ENCODE measurements at regions of chr19 and their contacts with region 1.

Region 1: DNA sequence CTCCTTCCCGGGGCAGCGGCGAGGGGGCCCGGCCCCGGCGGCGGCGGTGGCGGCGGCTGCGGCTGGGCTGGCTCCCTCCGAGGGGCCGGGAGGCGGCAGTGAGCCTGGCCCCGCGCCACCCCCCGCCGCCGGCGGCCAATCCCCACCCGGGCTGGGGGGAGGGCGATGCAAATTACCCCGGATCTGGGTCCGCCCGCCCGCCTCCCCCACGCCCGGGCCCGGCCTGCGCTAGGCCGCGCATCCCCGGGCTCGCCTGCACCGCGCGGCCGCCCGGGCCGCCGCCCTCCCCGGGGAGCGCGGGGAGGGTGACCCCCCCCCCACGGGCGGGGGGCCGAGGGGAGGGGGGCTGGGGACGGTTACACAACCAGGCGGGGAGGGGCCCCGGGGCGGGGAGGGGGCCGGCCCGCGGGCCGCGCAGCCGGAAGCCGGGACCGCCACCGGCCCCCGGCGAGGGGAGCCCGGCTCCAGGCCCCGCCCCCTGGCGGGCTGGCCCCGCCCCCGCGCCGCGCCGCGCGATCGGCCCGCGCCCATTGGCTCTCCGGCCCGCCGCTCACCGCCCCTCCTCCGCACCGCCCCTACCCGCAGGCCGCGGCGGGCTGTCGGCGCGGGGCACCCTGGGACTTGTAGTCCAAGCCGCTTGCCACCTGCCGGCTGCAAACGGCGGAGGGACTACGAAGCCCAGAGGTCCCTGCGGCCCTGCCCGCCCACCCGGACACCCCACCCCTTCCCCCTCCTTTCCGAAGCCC is 1.1 kb downstream of the ZBTB7A start:
- DNase-seq: peak; percentile 97 to 99 (median 98)
- ATAC-seq: peak; percentile 89
- H3K4me3 ChIP-seq: no peak overlapping the region
- H3K4me3 Mint-ChIP-seq: peak overlapping the region; percentile 29 to 90 (median 67)
- H3K27ac ChIP-seq: peak overlapping the region; percentile 95
- H3K27ac Mint-ChIP-seq: peak overlapping the region in 6 of 9 donors; percentile 12 to 86 (median 66)
- H3K4me1 ChIP-seq: peaks cover 41 to 56% of the 10 kb centered on the region in 2 donors
- H3K4me1 Mint-ChIP-seq: peaks cover under 1 to 42% (median 26%) of the 10 kb centered on the region in 7 donors
- H3K27me3 ChIP-seq: no peaks in the 10 kb centered on the region
- H3K27me3 Mint-ChIP-seq: no peaks in the 10 kb centered on the region

Region 2: GRCh38 chr19:4007021-4007835 is 58.4 kb before region 1 on chr19 and contains the start of gene PIAS4:
- CTCF ChIA-PET with region 1: no interaction called
- POLR2A ChIA-PET with region 1: interaction called, 6 read pairs
- intact Hi-C with region 1: loop called (anchors 1 kb)
- DNase-seq: peak; percentile 93 to 97 (median 96)
- ATAC-seq: peak; percentile 95
- H3K4me3 ChIP-seq: peak within 1 kb of the TSS; percentile 76
- H3K4me3 Mint-ChIP-seq: peak within 1 kb of the TSS; percentile 82 to 93 (median 88)
- H3K27ac ChIP-seq: peak within 1 kb of the TSS; percentile 75
- H3K27ac Mint-ChIP-seq: peak within 1 kb of the TSS; percentile 31 to 93 (median 85)
- H3K4me1 ChIP-seq: peaks cover 26 to 27% of the 10 kb centered on the region in 2 donors
- H3K4me1 Mint-ChIP-seq: peaks cover 13 to 33% (median 23%) of the 10 kb centered on the region in 7 donors
- H3K27me3 ChIP-seq: no peaks in the 10 kb centered on the region
- H3K27me3 Mint-ChIP-seq: no peaks in the 10 kb centered on the region
- total RNA-seq, gene PIAS4: 23.9 to 40.6 (median 28.8) TPM

Region 3: DNA sequence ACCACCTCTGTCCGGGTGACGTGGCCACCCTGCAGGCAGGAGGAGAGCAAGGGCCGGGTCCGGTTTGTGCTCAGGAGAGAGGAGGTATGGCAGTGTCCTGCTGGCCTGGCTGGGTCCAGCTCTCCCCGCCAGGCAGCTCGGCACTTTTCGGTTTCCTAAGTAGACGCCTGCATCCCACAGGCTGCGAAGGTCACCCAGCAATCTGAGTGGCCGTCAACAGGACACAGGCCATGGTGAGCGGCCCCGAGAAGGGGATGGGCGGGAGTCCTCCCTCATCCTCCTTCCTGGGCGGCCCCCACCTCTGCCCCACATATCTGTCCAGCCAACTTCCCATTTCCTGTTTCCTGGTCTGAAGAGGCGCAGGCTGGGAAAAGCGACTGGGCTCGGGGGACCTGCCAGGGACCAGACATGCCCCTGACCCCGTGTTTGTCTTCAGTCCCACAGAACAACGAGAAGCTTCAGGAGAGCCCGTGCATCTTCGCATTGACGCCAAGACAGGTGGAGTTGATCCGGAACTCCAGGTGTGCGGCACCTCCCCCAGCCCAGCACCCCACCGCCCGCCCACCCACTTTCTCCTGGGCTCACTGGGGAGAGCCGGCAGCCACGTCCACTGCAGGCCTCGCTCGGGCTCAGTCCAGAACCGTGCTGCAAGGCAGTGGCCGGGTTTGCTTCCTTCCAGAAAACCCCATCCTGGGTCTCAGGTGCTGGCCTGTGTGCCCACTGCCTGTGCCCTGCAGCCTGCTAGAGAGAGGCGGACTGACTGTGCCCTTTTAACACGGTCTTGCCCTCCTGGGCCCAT is 41.8 kb before region 1 on chr19:
- CTCF ChIA-PET with region 1: no interaction called
- POLR2A ChIA-PET with region 1: no interaction called
- intact Hi-C with region 1: no loop called
- DNase-seq: no peak
- ATAC-seq: no peak
- H3K4me3 ChIP-seq: no peak overlapping the region
- H3K4me3 Mint-ChIP-seq: no peak overlapping the region
- H3K27ac ChIP-seq: no peak overlapping the region
- H3K27ac Mint-ChIP-seq: no peak overlapping the region
- H3K4me1 ChIP-seq: no peaks in the 10 kb centered on the region
- H3K4me1 Mint-ChIP-seq: peaks cover 0 to 8% (median 7%) of the 10 kb centered on the region in 7 donors
- H3K27me3 ChIP-seq: no peaks in the 10 kb centered on the region
- H3K27me3 Mint-ChIP-seq: no peaks in the 10 kb centered on the region

Region 4: DNA sequence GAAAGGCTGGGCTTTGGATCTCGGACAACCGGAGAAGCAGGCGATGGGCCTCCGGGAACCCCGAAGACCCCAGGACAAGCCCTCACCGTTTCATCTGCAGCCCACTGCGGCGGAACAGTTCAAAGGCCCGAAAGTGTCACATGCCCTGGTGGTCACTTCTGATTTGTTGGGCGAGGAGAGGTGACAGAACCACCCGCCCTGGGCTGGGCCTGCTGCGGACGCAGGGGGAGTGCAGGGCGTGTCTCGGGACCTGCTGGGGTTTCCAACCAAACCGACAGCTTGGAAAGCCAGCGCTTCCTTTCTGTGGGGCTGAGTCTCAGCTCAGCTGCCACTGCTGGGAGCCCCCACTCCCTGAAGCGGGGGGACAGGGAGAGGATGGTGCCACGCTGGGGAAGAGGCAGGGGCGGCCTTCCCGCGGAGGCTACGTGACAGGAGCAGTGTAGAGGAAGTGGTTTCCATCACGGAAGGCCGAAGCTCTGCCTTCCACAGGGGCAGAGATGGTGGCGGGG is 23.9 kb after region 1 on chr19:
- CTCF ChIA-PET with region 1: no interaction called
- POLR2A ChIA-PET with region 1: interaction called, 11 read pairs
- intact Hi-C with region 1: loop called (anchors 1 to 2 kb)
- DNase-seq: peak in 7 of 9 donors; percentile 16 to 69 (median 26)
- ATAC-seq: peak; percentile 79
- H3K4me3 ChIP-seq: peak overlapping the region; percentile 27
- H3K4me3 Mint-ChIP-seq: peak overlapping the region; percentile 76 to 83 (median 79)
- H3K27ac ChIP-seq: peak overlapping the region; percentile 67
- H3K27ac Mint-ChIP-seq: peak overlapping the region; percentile 82 to 97 (median 94)
- H3K4me1 ChIP-seq: peaks cover 46% of the 10 kb centered on the region in 2 donors
- H3K4me1 Mint-ChIP-seq: peaks cover 23 to 53% (median 47%) of the 10 kb centered on the region in 7 donors
- H3K27me3 ChIP-seq: no peaks in the 10 kb centered on the region
- H3K27me3 Mint-ChIP-seq: no peaks in the 10 kb centered on the region

Region 5: DNA sequence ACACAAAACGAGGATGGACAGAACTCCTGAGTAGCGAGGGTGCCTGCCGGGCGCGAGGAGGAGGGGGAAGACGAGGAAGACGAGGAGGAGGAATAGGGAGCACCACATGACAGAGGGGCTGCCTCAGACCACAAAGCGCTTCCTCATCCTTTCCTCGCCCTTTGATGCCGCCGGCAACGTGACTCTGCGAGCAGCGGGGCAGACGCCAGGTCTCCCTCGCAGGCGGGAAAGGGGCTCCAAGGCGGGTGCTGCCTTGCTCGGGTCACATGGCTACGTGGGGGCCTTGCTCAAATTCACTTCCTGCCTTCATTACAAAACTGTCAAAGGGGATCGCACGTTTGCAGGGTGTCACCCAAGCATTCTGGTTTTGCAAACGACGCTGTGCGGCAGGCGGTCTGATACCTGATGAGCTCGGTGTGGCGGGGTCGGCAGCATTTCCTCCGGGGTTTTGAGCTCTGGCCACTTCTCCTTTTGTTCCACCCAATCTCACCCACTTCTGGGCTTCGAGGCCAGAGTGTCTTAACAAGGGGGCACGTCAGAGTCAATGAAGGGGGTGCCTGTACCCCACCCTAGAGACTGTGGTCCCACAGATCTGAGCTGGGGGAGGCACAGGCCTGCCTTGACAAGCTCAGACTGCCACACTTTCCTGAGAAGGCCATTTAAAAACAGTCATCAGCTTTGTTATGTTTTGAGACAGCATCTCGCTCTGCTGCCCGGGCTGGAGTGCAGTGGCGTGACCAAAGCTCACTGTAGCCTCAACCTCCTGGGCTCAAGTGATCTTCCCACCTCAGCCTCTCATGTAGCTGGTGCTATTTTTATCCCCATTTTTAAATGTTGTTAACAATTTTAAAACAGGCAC is 43.4 kb after region 1 on chr19:
- CTCF ChIA-PET with region 1: interaction called, 6 read pairs
- POLR2A ChIA-PET with region 1: interaction called, 36 read pairs
- intact Hi-C with region 1: loop called (anchors 1 to 5 kb)
- DNase-seq: peak; percentile 35 to 83 (median 79)
- ATAC-seq: peak; percentile 67
- H3K4me3 ChIP-seq: peak overlapping the region; percentile 11
- H3K4me3 Mint-ChIP-seq: peak overlapping the region; percentile 54 to 80 (median 74)
- H3K27ac ChIP-seq: peak overlapping the region; percentile 72
- H3K27ac Mint-ChIP-seq: peak overlapping the region; percentile 86 to 97 (median 94)
- H3K4me1 ChIP-seq: peaks cover 44 to 53% of the 10 kb centered on the region in 2 donors
- H3K4me1 Mint-ChIP-seq: peaks cover 34 to 85% (median 55%) of the 10 kb centered on the region in 7 donors
- H3K27me3 ChIP-seq: no peaks in the 10 kb centered on the region
- H3K27me3 Mint-ChIP-seq: no peaks in the 10 kb centered on the region

Region 6: DNA sequence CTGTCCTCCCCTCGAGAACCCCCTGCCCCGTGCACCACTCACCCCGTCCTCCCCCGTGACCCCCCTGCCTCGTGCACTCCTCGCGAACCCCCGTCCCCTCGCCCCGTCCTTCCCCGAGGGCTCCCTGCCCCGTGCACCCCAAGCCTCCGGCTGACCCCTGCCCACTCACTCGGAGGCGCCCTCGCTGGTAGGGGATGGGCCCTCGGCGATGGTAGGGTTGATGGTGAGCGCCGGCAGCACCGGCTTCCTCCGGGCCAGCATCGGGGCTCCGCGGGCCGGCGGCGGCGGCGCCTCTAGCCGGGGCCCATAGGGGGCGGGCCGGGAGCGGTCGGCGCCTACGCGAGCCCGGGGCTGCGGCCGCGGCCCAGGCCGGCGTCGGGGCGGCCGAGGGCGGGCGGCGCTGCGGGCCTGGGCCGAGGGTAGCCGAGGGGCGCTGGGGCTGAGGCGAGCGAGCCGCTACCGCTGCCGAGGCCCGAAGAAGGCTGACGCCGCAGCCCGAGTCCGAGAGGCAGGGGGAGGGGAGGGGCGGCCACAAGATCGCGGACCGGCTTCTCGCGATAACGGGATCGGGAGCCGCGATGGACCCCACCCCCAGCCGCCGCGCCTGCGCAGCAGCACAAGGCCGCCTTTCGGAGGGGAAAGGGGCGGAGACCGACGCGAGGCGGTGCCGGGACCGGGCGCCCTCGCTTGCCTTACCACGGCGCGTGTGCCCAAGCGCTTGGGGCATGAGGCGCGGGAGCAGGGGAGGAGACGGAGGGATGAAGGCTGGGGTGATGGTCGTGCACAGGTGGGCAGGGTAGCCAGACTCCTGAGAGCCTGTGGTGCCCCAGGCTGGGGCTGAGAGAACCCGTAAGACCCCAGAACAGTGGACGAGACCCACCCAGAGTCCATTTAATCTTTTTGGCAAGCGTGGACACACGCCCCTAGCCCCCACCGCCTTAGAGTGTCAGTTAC is 58.3 kb after region 1 on chr19 and contains the start of gene MAP2K2:
- CTCF ChIA-PET with region 1: no interaction called
- POLR2A ChIA-PET with region 1: interaction called, 4 read pairs
- intact Hi-C with region 1: loop called (anchors 1 to 2 kb)
- DNase-seq: peak; percentile 91 to 99 (median 96)
- ATAC-seq: peak; percentile 96
- H3K4me3 ChIP-seq: peak within 1 kb of the TSS; percentile 77
- H3K4me3 Mint-ChIP-seq: peak within 1 kb of the TSS; percentile 89 to 100 (median 94)
- H3K27ac ChIP-seq: peak within 1 kb of the TSS; percentile 80
- H3K27ac Mint-ChIP-seq: peak within 1 kb of the TSS; percentile 89 to 97 (median 93)
- H3K4me1 ChIP-seq: peaks cover 10 to 11% of the 10 kb centered on the region in 2 donors
- H3K4me1 Mint-ChIP-seq: peaks cover 17 to 31% (median 25%) of the 10 kb centered on the region in 7 donors
- H3K27me3 ChIP-seq: no peaks in the 10 kb centered on the region
- H3K27me3 Mint-ChIP-seq: no peaks in the 10 kb centered on the region
- total RNA-seq, gene MAP2K2: 87.4 to 162 (median 123) TPM

Region 7: GRCh38 chr19:4182084-4182810 is 116.6 kb after region 1 on chr19 and contains the starts of genes ANKRD24 and SIRT6:
- CTCF ChIA-PET with region 1: no interaction called
- POLR2A ChIA-PET with region 1: no interaction called
- intact Hi-C with region 1: loop called (anchors 1 to 5 kb)
- DNase-seq: peak; percentile 91 to 97 (median 96)
- ATAC-seq: peak; percentile 90
- H3K4me3 ChIP-seq: peak within 1 kb of the TSS; percentile 90
- H3K4me3 Mint-ChIP-seq: peak within 1 kb of the TSS; percentile 92 to 99 (median 96)
- H3K27ac ChIP-seq: peak within 1 kb of the TSS; percentile 86
- H3K27ac Mint-ChIP-seq: peak within 1 kb of the TSS; percentile 92 to 98 (median 95)
- H3K4me1 ChIP-seq: peaks cover 14 to 15% of the 10 kb centered on the region in 2 donors
- H3K4me1 Mint-ChIP-seq: peaks cover 25 to 44% (median 39%) of the 10 kb centered on the region in 7 donors
- H3K27me3 ChIP-seq: no peaks in the 10 kb centered on the region
- H3K27me3 Mint-ChIP-seq: peaks cover 0 to 2% (median 0%) of the 10 kb centered on the region in 5 donors
- total RNA-seq, gene ANKRD24: 0.75 to 2.8 (median 2.4) TPM
- total RNA-seq, gene SIRT6: 20.0 to 41.2 (median 26.0) TPM

Region 8: GRCh38 chr19:4457654-4458395 is 392.2 kb after region 1 on chr19 and contains the start of gene UBXN6:
- CTCF ChIA-PET with region 1: no interaction called
- POLR2A ChIA-PET with region 1: no interaction called
- intact Hi-C with region 1: loop called in 1 of 2 experiments (anchors 5 kb)
- DNase-seq: peak; percentile 92 to 99 (median 96)
- ATAC-seq: peak; percentile 99
- H3K4me3 ChIP-seq: peak within 1 kb of the TSS; percentile 64
- H3K4me3 Mint-ChIP-seq: peak within 1 kb of the TSS; percentile 83 to 98 (median 89)
- H3K27ac ChIP-seq: peak within 1 kb of the TSS; percentile 83
- H3K27ac Mint-ChIP-seq: peak within 1 kb of the TSS; percentile 89 to 97 (median 93)
- H3K4me1 ChIP-seq: peaks cover 10% of the 10 kb centered on the region in 2 donors
- H3K4me1 Mint-ChIP-seq: peaks cover 9 to 25% (median 16%) of the 10 kb centered on the region in 7 donors
- H3K27me3 ChIP-seq: no peaks in the 10 kb centered on the region
- H3K27me3 Mint-ChIP-seq: no peaks in the 10 kb centered on the region
- total RNA-seq, gene UBXN6: 49.2 to 68.6 (median 53.1) TPM